ENCODE measurements at regions of chr6 and their contacts with region 1.

Region 1: GRCh38 chr6:138287144-138287955 is 69.1 kb upstream of the PBOV1 start:
- DNase-seq: peak; percentile 71
- ATAC-seq: peak; percentile 65
- H3K4me3 Mint-ChIP-seq: no peak overlapping the region
- H3K27ac Mint-ChIP-seq: no peak overlapping the region
- H3K4me1 Mint-ChIP-seq: peaks cover 5% of the 10 kb centered on the region
- H3K27me3 Mint-ChIP-seq: peaks cover 2% of the 10 kb centered on the region
- CTCF ChIP-seq: peak; percentile 69

Region 2: GRCh38 chr6:138157986-138158638 is 129.2 kb before region 1 on chr6:
- CTCF ChIA-PET with region 1: no interaction called
- POLR2A ChIA-PET with region 1: no interaction called
- intact Hi-C with region 1: no loop called
- DNase-seq: no peak
- ATAC-seq: no peak
- H3K4me3 Mint-ChIP-seq: no peak overlapping the region
- H3K27ac Mint-ChIP-seq: no peak overlapping the region
- H3K4me1 Mint-ChIP-seq: peaks cover 12% of the 10 kb centered on the region
- H3K27me3 Mint-ChIP-seq: peaks cover 46% of the 10 kb centered on the region
- CTCF ChIP-seq: no peak

Region 3: DNA sequence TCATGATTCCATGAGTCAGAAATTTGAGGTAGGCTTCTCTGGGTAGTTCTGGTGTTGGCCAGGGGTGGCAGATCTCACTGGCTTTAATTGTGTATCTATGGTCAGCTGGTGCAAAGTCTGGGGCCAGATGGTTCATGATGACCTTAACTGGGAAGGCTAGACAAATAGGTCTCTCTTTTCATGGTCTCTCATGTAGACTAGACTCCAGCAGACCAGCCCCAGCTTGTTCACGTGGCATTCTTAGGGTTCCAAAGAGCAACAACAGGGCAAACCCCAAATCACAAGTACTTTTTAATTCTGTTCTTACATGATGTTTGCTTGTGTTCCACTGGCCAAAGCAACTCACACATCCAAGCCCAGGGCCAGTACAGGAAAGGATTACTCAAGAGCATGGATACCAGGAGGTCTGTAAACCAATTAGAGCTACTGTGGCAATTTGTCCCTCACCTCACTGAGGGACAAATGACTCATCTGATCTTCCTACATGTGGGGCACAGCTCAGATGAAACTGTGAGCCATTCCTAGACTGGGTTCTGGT is 10.5 kb after region 1 on chr6:
- CTCF ChIA-PET with region 1: interaction called, 12 read pairs
- POLR2A ChIA-PET with region 1: no interaction called
- intact Hi-C with region 1: no loop called
- DNase-seq: peak; percentile 20
- ATAC-seq: peak; percentile 80
- H3K4me3 Mint-ChIP-seq: no peak overlapping the region
- H3K27ac Mint-ChIP-seq: no peak overlapping the region
- H3K4me1 Mint-ChIP-seq: peaks cover 6% of the 10 kb centered on the region
- H3K27me3 Mint-ChIP-seq: peaks cover 11% of the 10 kb centered on the region
- CTCF ChIP-seq: no peak